ENCODE measurements at regions of chr11 and their contacts with region 1.

Region 1: GRCh38 chr11:126989942-126990715 is 10.4 kb downstream of the KIRREL3 start:
- DNase-seq: peak; percentile 67
- H3K4me3 Mint-ChIP-seq: no peak overlapping the region
- H3K27ac Mint-ChIP-seq: no peak overlapping the region
- H3K4me1 Mint-ChIP-seq: no peaks in the 10 kb centered on the region
- H3K27me3 Mint-ChIP-seq: peaks cover 14% of the 10 kb centered on the region

Region 2: GRCh38 chr11:126310228-126310991 is 679.7 kb before region 1 on chr11:
- CTCF ChIA-PET with region 1: no interaction called
- intact Hi-C with region 1: loop called (anchors 10 kb)
- DNase-seq: peak; percentile 70
- H3K4me3 Mint-ChIP-seq: no peak overlapping the region
- H3K27ac Mint-ChIP-seq: no peak overlapping the region
- H3K4me1 Mint-ChIP-seq: peaks cover 17% of the 10 kb centered on the region
- H3K27me3 Mint-ChIP-seq: no peaks in the 10 kb centered on the region

Region 3: DNA sequence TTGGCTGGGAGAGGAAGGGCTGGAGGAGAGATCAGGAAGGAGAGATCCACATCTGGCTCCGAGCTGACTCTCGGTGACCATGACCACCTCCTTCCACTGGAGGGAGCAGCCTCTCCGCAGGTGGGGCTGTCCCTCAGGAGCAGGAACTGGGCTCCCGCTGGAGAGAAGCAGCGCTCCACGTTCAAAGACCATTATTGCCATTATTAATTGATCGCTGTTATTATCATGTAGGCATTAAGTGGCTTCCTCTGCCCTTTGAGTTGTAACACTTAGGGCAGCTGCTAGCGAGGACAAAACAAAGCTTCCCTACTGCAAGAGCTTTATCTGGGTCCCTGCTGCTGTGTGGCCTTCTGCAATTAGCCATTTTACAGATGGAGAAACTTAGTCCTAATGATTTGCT is 382.8 kb before region 1 on chr11:
- CTCF ChIA-PET with region 1: interaction called, 4 read pairs
- intact Hi-C with region 1: loop called (anchors 1 kb)
- DNase-seq: peak; percentile 32
- H3K4me3 Mint-ChIP-seq: no peak overlapping the region
- H3K27ac Mint-ChIP-seq: no peak overlapping the region
- H3K4me1 Mint-ChIP-seq: no peaks in the 10 kb centered on the region
- H3K27me3 Mint-ChIP-seq: peaks cover 29% of the 10 kb centered on the region